ENCODE measurements at regions of chr19 and their contacts with region 1.

Region 1: DNA sequence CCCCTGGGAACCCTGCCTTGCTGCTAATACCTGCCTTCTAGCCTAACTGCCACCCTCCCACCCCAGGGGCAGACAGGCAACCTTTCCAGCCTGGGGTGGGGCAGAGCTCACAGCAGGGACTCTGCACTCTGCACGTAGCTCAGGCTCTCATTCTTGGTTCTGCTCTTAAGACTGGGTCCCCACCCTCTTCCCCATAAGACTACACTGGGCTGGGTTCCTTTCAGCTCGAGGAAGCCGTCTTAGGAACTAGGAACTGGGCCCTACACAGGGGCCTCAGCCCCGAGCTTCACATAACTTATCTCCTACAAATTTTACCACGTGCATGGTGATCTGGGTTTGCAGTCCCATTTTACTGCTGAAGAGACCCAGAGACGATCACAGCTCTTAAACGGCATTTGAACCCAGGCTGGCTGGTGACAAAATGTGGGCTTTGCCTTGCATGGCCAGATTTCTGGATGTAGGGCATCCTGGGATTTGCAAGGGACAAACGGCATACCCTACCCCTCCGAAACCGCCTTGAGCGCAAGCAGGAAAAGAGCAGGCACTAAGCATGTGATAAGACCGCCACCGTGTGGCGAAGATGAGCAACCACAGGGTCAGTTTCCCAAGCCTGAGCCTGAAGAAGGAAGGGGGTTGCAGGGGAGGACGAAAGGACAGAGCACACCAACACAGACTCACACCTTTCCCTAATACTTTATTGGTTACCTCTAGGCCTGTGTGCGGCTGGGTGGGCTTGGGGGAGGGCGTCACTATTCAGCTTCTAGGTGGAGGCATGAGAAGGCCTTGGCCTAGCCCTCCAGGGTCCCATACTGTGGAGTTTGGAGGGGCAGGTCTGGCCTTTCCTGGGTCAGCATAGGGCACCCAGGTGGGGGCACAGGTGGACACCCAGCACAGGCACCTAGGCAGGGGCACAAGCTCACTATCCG is 5.1 kb downstream of the JUNB start:
- DNase-seq: peak; percentile 76 to 88 (median 85)
- H3K4me3 ChIP-seq: peak overlapping the region in 4 of 7 experiments; percentile 3 to 40 (median 26)
- H3K27ac ChIP-seq: peak overlapping the region in 1 of 2 experiments; percentile 54
- H3K4me1 ChIP-seq: peaks cover 2 to 37% (median 34%) of the 10 kb centered on the region in 4 experiments
- H3K27me3 ChIP-seq: no peaks in the 10 kb centered on the region

Region 2: GRCh38 chr19:12751635-12752034 is 44.8 kb before region 1 on chr19 and contains the start of gene BEST2:
- CTCF ChIA-PET with region 1: interaction called, 612 read pairs
- POLR2A ChIA-PET with region 1: interaction called, 3 read pairs
- DNase-seq: no peak
- H3K4me3 ChIP-seq: no peak within 1 kb of the TSS
- H3K27ac ChIP-seq: no peak within 1 kb of the TSS
- H3K4me1 ChIP-seq: peaks cover 0 to 9% (median 3%) of the 10 kb centered on the region in 4 experiments
- H3K27me3 ChIP-seq: peaks cover 0 to 45% (median 5%) of the 10 kb centered on the region in 5 experiments

Region 3: GRCh38 chr19:12815088-12815487 is 18.7 kb after region 1 on chr19:
- CTCF ChIA-PET with region 1: no interaction called
- POLR2A ChIA-PET with region 1: no interaction called
- DNase-seq: no peak
- H3K4me3 ChIP-seq: no peak overlapping the region
- H3K27ac ChIP-seq: no peak overlapping the region
- H3K4me1 ChIP-seq: no peaks in the 10 kb centered on the region
- H3K27me3 ChIP-seq: no peaks in the 10 kb centered on the region

Region 4: GRCh38 chr19:12834976-12835757 is 38.8 kb after region 1 on chr19:
- CTCF ChIA-PET with region 1: no interaction called
- POLR2A ChIA-PET with region 1: no interaction called
- DNase-seq: peak in 2 of 3 donors; percentile 61 to 67
- H3K4me3 ChIP-seq: no peak overlapping the region
- H3K27ac ChIP-seq: no peak overlapping the region
- H3K4me1 ChIP-seq: peaks cover 0 to 32% (median 20%) of the 10 kb centered on the region in 4 experiments
- H3K27me3 ChIP-seq: peaks cover 20 to 96% (median 42%) of the 10 kb centered on the region in 5 experiments

Region 5: GRCh38 chr19:12974301-12975220 is 178.2 kb after region 1 on chr19:
- CTCF ChIA-PET with region 1: no interaction called
- POLR2A ChIA-PET with region 1: no interaction called
- DNase-seq: no peak
- H3K4me3 ChIP-seq: no peak overlapping the region
- H3K27ac ChIP-seq: no peak overlapping the region
- H3K4me1 ChIP-seq: peaks cover 0 to 14% (median 10%) of the 10 kb centered on the region in 4 experiments
- H3K27me3 ChIP-seq: no peaks in the 10 kb centered on the region